OCI-LY7 (cell line): ENCODE measurements at regions of chr11 and their contacts with region 1.

Region 1: DNA sequence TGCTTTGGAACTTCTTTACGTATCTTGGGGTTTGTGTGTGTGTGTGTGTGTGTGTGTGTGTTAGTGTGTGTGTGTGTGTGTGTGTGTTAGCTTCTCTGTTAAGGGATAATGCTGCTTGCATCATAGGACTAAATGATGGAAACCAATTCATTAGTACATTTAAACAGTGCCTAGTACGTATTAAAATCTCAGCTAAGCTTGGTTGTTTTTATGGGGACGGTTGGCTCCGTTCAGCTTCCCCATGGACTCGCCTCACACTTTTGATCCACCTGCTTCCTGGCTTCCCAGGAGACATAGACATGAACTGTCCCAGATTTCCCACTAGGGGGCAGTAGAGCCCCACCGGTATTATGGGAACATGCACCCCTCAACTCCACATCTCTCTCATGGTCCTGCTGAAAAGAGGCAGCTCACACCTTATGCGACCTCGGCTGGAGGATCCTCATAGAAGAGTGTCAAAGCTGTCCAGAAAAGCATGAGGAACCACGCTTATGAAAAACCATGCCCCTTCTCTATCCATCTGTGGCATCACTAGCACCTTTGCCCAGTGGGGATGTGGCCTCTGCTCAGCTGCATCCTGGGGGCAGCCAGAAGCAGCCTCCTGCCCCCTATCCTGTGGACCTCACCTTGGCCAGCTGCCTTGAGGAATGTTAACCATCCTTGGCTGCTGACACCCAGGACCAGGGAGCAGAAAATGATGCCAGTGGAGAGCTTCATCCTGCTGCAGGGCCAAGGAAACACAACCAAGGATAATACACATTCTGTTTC is 9.7 kb upstream of the SAAL1 start:
- DNase-seq: peak; percentile 85
- H3K4me3 ChIP-seq: no peak overlapping the region
- H3K27ac ChIP-seq: no peak overlapping the region
- H3K4me1 ChIP-seq: peaks cover 8% of the 10 kb centered on the region
- CTCF ChIP-seq: peak; percentile 97

Region 2: GRCh38 chr11:18132341-18132740 is 16.8 kb after region 1 on chr11 and contains the start of gene MRGPRX3:
- CTCF ChIA-PET with region 1: no interaction called
- POLR2A ChIA-PET with region 1: no interaction called
- intact Hi-C with region 1: no loop called
- DNase-seq: no peak
- H3K4me3 ChIP-seq: no peak within 1 kb of the TSS
- H3K27ac ChIP-seq: no peak within 1 kb of the TSS
- H3K4me1 ChIP-seq: no peaks in the 10 kb centered on the region
- CTCF ChIP-seq: no peak
- total RNA-seq, gene MRGPRX3: not detected in 2 replicates

Region 3: DNA sequence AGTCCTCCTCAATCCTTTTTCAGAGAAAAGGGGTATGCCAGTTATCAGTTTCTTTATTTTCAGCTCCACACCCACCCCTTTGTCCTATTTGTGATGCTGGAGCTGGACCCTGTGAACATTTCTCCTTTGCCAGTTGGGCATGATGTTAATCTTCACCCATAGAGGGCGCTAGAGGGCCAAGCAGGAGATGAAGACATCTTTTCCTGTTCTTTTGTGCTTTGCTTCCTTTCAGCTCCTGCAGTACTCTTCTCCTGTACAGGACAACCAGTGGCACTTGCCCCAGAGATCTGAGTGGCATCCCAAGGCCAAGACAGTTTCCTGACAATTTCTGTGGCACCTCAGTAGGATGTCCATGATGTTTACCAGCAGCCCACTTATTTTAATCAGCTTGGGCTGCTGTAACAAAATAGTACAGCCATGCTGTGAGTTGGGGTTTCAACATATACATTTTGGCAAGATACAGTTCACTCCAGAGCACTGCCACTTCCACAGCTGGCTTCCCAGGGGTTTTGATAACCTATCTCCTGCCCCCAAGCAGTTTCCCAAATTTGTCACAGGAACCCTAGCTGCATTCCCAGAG is 128.3 kb after region 1 on chr11:
- CTCF ChIA-PET with region 1: interaction called, 4 read pairs
- POLR2A ChIA-PET with region 1: no interaction called
- intact Hi-C with region 1: loop called (anchors 2 kb)
- DNase-seq: peak; percentile 81
- H3K4me3 ChIP-seq: no peak overlapping the region
- H3K27ac ChIP-seq: no peak overlapping the region
- H3K4me1 ChIP-seq: peaks cover 21% of the 10 kb centered on the region
- CTCF ChIP-seq: peak; percentile 95

Region 4: GRCh38 chr11:18321980-18322711 is 206.6 kb after region 1 on chr11 and contains the starts of genes GTF2H1 and HPS5:
- CTCF ChIA-PET with region 1: no interaction called
- POLR2A ChIA-PET with region 1: interaction called, 3 read pairs
- intact Hi-C with region 1: loop called (anchors 5 kb)
- DNase-seq: peak; percentile 99
- H3K4me3 ChIP-seq: peak within 1 kb of the TSS; percentile 87
- H3K27ac ChIP-seq: peak within 1 kb of the TSS; percentile 79
- H3K4me1 ChIP-seq: peaks cover 40% of the 10 kb centered on the region
- CTCF ChIP-seq: no peak
- total RNA-seq, gene GTF2H1: 48.0 and 53.1 TPM in 2 replicates
- total RNA-seq, gene HPS5: 23.0 and 31.1 TPM in 2 replicates

Region 5: GRCh38 chr11:18452927-18453326 is 337.4 kb after region 1 on chr11:
- CTCF ChIA-PET with region 1: no interaction called
- POLR2A ChIA-PET with region 1: interaction called, 11 read pairs
- intact Hi-C with region 1: no loop called
- DNase-seq: no peak
- H3K4me3 ChIP-seq: no peak overlapping the region
- H3K27ac ChIP-seq: no peak overlapping the region
- H3K4me1 ChIP-seq: no peaks in the 10 kb centered on the region
- CTCF ChIP-seq: no peak

Region 6: DNA sequence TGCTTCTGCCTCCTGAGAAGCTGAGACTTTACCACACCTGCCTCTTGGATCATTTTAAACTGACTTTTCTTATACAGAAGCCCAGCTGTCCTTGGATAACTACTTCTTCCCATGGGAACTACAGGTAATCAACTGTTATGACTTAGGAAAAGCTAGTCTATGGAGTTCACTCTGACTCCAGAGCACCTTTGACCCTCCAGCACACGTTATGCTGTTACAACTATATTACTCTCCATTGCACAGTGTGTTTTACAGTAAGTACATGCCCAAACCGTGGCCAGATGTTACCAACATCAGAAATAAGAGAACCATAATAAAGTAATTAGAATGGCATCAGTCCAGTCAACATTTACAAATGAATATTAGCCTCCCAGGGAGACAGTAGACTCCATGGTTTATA is 432.5 kb after region 1 on chr11:
- CTCF ChIA-PET with region 1: no interaction called
- POLR2A ChIA-PET with region 1: no interaction called
- intact Hi-C with region 1: no loop called
- DNase-seq: no peak
- H3K4me3 ChIP-seq: no peak overlapping the region
- H3K27ac ChIP-seq: no peak overlapping the region
- H3K4me1 ChIP-seq: no peaks in the 10 kb centered on the region
- CTCF ChIP-seq: no peak

Region 7: DNA sequence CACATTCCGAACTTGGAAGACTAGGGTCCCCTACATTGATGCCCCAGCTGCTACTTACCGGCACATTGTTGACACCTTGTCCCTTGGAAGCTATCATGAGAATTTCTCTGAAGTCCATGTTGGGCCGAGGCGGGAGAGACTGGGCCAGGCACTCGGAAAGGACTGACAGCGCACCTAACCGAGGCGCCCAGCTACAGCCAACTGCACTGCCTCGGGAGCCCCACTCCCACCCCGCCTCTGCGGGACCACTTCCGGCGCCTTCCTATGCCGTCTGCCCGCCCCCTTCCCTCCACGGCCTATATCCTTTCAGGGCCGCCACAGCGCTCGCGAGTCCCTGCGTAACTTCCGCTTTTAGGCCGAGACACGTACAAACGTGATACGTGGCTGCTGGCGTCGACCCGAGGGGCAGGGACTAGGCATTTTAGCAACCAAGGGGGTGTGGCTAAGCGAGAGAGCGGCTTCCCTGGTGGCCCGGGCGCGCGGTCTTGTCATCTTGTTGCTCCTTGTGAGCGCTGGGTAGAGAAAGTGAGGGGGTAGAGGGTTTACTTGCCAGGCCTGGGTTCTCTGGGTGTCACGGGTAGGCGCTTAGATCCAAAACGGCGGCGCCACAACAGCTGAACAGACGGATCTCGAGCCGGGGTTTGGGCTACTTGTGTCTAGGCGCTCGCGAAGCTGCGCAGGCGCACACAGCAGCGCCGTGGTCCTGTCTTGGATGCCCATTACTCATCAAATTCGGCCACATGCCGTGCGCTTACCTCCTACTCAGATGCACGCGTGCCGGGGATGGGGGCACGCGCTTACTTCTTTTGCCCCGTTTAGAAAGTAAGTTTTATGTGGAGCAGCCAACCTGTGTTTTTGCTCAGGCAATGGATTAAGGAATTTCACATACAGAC is 518.8 kb after region 1 on chr11 and contains the start of gene SPTY2D1:
- CTCF ChIA-PET with region 1: interaction called, 3 read pairs
- POLR2A ChIA-PET with region 1: no interaction called
- intact Hi-C with region 1: loop called (anchors 10 kb)
- DNase-seq: peak; percentile 100
- H3K4me3 ChIP-seq: peak within 1 kb of the TSS; percentile 90
- H3K27ac ChIP-seq: peak within 1 kb of the TSS; percentile 67
- H3K4me1 ChIP-seq: peaks cover 16% of the 10 kb centered on the region
- CTCF ChIP-seq: no peak
- total RNA-seq, gene SPTY2D1: 15.6 and 15.8 TPM in 2 replicates

Region 8: GRCh38 chr11:18731949-18732821 is 616.6 kb after region 1 on chr11:
- CTCF ChIA-PET with region 1: no interaction called
- POLR2A ChIA-PET with region 1: interaction called, 3 read pairs
- intact Hi-C with region 1: loop called (anchors 2 kb)
- DNase-seq: peak; percentile 67
- H3K4me3 ChIP-seq: no peak overlapping the region
- H3K27ac ChIP-seq: no peak overlapping the region
- H3K4me1 ChIP-seq: peaks cover 13% of the 10 kb centered on the region
- CTCF ChIP-seq: peak; percentile 99